OCI-LY7 (cell line): ENCODE measurements at regions of chr1 and their contacts with region 1.

Region 1: DNA sequence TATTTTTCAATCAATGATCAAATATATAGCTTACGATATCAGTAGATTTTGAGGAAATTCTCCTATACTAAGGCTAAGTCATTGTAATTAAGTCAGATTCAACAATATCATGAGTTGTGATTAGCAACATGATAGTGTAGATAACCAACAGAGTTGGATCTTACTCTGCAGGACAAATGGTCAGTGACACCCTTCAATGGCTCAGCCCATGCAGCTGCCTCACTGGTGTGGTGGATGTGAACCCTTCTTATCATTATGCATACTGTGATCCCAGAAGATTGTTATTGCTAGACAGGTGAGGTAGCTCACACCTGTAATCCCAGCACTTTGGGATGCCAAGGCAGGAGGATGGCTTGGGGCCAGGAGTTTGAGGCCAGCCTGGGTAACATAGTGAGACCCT is 5.6 kb downstream of the SLC16A1 start:
- DNase-seq: no peak
- H3K4me3 ChIP-seq: no peak overlapping the region
- H3K27ac ChIP-seq: no peak overlapping the region
- H3K4me1 ChIP-seq: peaks cover 26% of the 10 kb centered on the region
- CTCF ChIP-seq: no peak

Region 2: GRCh38 chr1:112935461-112936289 is 14.8 kb before region 1 on chr1:
- CTCF ChIA-PET with region 1: interaction called, 3 read pairs
- POLR2A ChIA-PET with region 1: interaction called, 31 read pairs
- intact Hi-C with region 1: loop called (anchors 2 kb)
- DNase-seq: peak; percentile 22
- H3K4me3 ChIP-seq: no peak overlapping the region
- H3K27ac ChIP-seq: peak overlapping the region; percentile 43
- H3K4me1 ChIP-seq: peaks cover 40% of the 10 kb centered on the region
- CTCF ChIP-seq: no peak